ENCODE measurements at regions of chr12 and their contacts with region 1.

Region 1: GRCh38 chr12:13100882-13101769 is 2.3 kb downstream of the GSG1 start:
- DNase-seq: peak in 1 of 2 donors; percentile 96
- H3K4me3 ChIP-seq: peak overlapping the region; percentile 55 to 60
- H3K27ac ChIP-seq: peak overlapping the region; percentile 96
- H3K4me1 ChIP-seq: peaks cover 70% of the 10 kb centered on the region
- H3K27me3 ChIP-seq: no peaks in the 10 kb centered on the region
- CTCF ChIP-seq: no peak
- POLR2A ChIP-seq: no peak

Region 2: DNA sequence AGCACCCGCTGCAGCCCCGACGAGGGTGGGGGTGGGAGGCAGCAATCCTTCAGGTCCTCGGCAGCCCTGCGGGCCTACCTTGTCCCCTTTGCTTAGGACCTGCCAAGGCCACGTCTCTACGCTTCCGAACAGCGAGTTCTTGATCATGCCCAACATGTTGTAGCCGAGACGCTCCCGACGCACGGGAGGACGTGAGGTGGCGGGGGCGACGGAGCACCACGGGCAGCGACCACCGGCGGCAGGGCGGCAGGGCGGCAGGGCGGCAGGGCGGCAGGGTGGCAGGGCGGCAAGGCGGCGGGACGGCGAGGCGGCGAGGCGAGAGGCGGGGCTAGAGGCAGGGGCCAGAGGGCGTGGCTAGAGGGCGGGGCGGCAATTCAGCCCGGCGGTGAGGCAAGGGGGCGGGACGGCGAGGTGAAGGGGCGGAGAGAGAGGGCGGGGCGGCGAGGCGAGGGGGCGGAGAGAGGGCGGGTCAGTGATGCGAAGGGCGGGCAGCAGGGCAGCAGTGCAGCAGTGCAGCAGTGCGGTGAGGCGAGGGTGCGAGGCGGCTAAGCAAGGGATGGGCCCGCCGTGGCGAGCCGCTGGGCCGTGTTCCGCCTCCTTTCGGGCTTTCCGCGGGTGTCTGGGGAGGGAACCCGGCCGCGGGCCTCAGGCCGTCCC is 101.0 kb before region 1 on chr12 and contains the start of gene HEBP1:
- intact Hi-C with region 1: loop called (anchors 5 kb)
- DNase-seq: peak; percentile 96 to 98
- H3K4me3 ChIP-seq: peak within 1 kb of the TSS; percentile 82 to 98
- H3K27ac ChIP-seq: peak within 1 kb of the TSS; percentile 90
- H3K4me1 ChIP-seq: peaks cover 37% of the 10 kb centered on the region
- H3K27me3 ChIP-seq: no peaks in the 10 kb centered on the region
- CTCF ChIP-seq: no peak
- POLR2A ChIP-seq: peak; percentile 55 to 96
- total RNA-seq, gene HEBP1: 47.6 TPM

Measured in vagina (tissue), 2 donors.